IMR-90 (cell line): ENCODE measurements at regions of chr20 and their contacts with region 1.

Region 1: GRCh38 chr20:22795871-22796270 is 211.5 kb upstream of the FOXA2 start:
- DNase-seq: peak; percentile 99
- ATAC-seq: peak; percentile 92
- H3K4me3 ChIP-seq: no peak overlapping the region
- H3K27ac ChIP-seq: peak overlapping the region; percentile 88
- H3K4me1 ChIP-seq: peaks cover 10% of the 10 kb centered on the region
- H3K27me3 ChIP-seq: peaks cover 2% of the 10 kb centered on the region; the same call in 1 of the 2 replicates
- CTCF ChIP-seq: no peak
- POLR2A ChIP-seq: no peak
- RAD21 ChIP-seq: peak; percentile 6; the same call in 1 of the 2 replicates

Region 2: DNA sequence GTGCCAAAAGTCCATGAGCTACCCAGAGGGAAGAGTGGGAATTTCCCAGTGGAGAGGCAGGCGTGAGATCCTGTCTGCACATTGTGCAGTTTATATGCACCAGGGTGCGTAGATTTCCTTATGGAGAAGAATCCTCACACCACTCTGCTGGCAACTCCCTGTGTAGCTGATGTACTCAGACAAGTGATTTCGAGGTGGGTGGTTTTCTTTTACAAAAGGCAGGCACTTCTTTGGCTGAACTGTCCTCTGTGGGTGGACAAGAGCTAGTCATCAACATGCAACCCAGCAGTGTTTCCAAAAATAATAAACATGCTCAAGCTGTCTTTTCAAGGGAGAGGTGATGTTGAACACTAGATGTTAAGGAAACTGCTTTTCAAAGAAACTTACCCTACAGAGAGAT is 433.0 kb after region 1 on chr20:
- CTCF ChIA-PET with region 1: no interaction called
- POLR2A ChIA-PET with region 1: no interaction called
- dilution Hi-C with region 1: no loop called
- in situ Hi-C with region 1: no loop called
- intact Hi-C with region 1: loop called (anchors 2 kb)
- DNase-seq: peak; percentile 95
- ATAC-seq: peak; percentile 66
- H3K4me3 ChIP-seq: no peak overlapping the region
- H3K27ac ChIP-seq: no peak overlapping the region
- H3K4me1 ChIP-seq: peaks cover 14% of the 10 kb centered on the region
- H3K27me3 ChIP-seq: peaks cover 2% of the 10 kb centered on the region; the same call in 1 of the 2 replicates
- CTCF ChIP-seq: no peak
- POLR2A ChIP-seq: no peak
- RAD21 ChIP-seq: peak; percentile 14; the same call in 1 of the 2 replicates